ENCODE measurements at regions of chr11 and their contacts with region 1.

Region 1: GRCh38 chr11:114036156-114036811 is 23.2 kb upstream of the ZBTB16 start:
- DNase-seq: peak; percentile 85 to 93 (median 89)
- H3K4me3 ChIP-seq: peak overlapping the region in 2 of 4 donors; percentile 18 to 43
- H3K27ac ChIP-seq: peak overlapping the region in 4 of 5 donors; percentile 30 to 83 (median 71)
- H3K4me1 ChIP-seq: peaks cover 0 to 14% of the 10 kb centered on the region in 2 donors
- H3K27me3 ChIP-seq: no peaks in the 10 kb centered on the region
- CTCF ChIP-seq: peak; percentile 69 to 95 (median 86)
- POLR2A ChIP-seq: peak in 1 of 2 donors; percentile 27

Region 2: DNA sequence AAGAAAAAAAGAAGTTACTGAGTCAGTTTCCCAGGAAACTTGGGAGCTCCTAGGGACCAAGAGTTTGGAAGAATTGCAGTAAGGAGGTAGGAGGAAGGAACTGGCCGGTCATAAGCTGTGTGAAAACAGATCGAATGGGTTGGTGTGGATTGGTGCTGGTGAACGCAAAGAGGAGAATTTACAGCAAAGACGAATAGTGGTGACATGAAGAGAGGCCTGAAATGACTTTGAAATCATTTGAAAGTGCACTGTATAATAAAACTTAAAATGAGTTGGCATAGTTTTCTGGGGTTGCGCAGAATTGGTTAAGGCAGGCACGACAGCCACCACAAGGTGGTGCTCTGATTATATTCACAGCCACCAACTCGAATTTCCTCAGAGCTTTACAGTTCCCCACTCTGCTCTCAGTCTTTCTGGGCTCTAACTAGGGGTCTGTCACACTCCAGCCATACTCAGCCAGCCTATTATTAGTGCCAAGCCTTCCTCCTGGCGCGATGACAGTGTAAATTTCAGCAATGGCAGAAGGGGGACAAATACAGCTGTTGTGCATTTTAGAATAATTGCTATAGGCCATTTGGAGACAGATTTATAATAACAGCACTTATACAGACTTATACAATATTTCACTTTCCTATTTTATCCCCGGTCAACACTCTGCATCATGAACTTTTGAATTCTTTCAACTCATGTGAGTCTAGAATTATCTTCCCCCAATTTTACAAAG is 140.0 kb before region 1 on chr11:
- intact Hi-C with region 1: loop called in 1 of 2 experiments (anchors 10 kb)
- DNase-seq: peak in 6 of 7 donors; percentile 16 to 69 (median 40)
- H3K4me3 ChIP-seq: no peak overlapping the region
- H3K27ac ChIP-seq: no peak overlapping the region
- H3K4me1 ChIP-seq: peaks cover 3 to 10% of the 10 kb centered on the region in 2 donors
- H3K27me3 ChIP-seq: no peaks in the 10 kb centered on the region
- CTCF ChIP-seq: peak; percentile 58 to 81 (median 70)
- POLR2A ChIP-seq: no peak

Region 3: GRCh38 chr11:113926273-113927197 is 109.7 kb before region 1 on chr11:
- intact Hi-C with region 1: no loop called
- DNase-seq: no peak
- H3K4me3 ChIP-seq: no peak overlapping the region
- H3K27ac ChIP-seq: no peak overlapping the region
- H3K4me1 ChIP-seq: no peaks in the 10 kb centered on the region
- H3K27me3 ChIP-seq: no peaks in the 10 kb centered on the region
- CTCF ChIP-seq: no peak
- POLR2A ChIP-seq: no peak

Region 4: DNA sequence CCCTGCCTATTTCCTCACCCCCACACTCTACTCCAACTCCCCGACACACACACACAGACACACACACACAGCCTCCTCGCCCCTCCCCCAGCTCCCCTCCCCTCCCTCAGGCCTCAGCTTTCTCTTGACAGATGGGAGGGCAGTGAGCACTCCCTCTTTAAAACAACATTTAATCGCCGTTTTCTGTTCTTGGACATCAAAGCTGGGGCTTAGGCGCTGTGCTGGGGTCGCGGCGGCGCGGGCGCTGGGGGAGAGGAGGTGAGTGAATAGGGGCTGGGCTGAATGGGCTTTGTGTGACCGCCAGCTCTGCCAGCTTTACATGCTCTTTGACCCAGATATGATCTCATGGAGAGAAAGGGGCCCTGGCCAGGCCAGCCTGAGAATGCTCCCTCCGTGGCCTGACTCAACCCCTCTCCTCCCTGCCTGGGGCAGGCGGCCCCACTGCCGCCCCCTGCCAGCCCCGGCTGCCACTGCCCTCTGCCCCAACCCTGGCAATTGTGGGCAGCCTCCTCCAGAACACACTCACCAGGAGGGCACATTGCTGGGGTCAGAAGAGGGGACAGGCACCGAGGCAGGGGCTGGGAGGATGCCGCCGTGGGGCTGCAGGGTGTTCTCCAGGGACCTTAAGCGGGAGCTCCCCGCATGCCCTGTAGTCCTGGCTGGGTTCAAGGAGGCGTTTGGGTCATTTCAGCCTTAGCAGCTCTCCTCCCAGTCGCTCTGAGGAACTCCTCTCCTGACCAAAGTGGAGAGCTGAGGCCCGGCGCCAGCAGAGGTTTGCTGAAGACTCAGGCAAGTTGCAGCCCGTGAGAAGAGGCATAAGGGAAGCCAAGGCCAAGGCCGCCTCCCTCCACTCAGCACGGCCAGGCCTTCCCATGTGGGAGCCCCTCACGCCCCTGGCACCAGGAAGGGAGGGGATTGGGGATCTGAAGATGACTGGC is 221.6 kb after region 1 on chr11:
- intact Hi-C with region 1: loop called (anchors 5 kb)
- DNase-seq: peak in 6 of 7 donors; percentile 65 to 80 (median 66)
- H3K4me3 ChIP-seq: no peak overlapping the region
- H3K27ac ChIP-seq: peak overlapping the region in 4 of 5 donors; percentile 29 to 86 (median 64)
- H3K4me1 ChIP-seq: peaks cover 30 to 41% of the 10 kb centered on the region in 2 donors
- H3K27me3 ChIP-seq: no peaks in the 10 kb centered on the region
- CTCF ChIP-seq: peak in 5 of 6 experiments; percentile 25 to 48 (median 31)
- POLR2A ChIP-seq: no peak

Measured in adrenal gland (tissue), 19 donors.